ENCODE measurements at regions of chr22 and their contacts with region 1.

Region 1: DNA sequence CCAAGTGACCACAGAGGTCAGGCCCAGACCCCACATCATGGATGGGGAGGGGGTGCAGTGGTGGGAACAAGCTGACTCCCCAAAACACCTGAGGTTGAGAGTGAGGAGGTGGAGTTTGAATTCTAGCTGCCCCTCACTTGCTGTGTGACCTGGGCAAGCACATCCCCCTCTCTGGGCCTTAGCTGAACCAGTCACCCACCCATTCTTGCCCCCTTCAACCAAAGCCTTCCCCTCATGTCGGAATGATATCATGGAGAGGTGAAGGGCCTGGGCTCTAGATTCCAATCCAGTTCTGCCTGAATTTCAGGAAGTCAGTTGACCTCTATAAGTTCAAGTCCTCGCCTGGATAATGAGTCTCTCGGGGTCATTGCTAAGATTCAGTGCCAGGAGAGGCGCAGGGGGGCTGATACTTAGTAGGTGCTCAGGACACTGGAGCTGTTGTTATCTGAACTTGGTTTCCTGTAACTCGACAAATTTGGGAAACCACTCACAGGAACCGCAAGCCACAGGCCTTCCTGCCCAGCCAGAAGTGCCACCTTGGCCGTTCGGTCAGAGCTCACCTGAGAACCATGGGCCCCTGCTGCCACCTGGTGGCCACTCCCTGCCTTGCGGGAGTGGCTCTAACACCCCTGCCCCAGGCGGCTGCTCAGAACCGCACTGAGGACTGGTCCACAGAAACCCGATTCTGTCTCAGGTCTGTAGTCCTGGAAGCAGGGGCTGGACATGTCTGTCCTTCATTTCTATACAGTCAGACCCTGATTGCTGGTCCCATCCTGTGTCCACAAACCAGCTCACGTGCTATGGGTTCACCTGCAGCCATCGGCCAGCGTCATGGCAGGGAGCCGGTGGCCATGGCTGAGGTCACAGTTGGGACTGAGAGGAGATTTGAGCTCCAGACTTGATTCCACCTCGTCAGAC is 6.9 kb downstream of the CDC42EP1 start:
- DNase-seq: peak; percentile 70 to 93 (median 82)
- ATAC-seq: peak; percentile 94
- H3K4me3 ChIP-seq: peak overlapping the region; percentile 28
- H3K4me3 Mint-ChIP-seq: peak overlapping the region; percentile 61 to 85 (median 72)
- H3K27ac ChIP-seq: no peak overlapping the region
- H3K27ac Mint-ChIP-seq: peak overlapping the region in 3 of 9 donors; percentile 26 to 70 (median 62)
- H3K4me1 ChIP-seq: peaks cover 20 to 22% of the 10 kb centered on the region in 2 donors
- H3K4me1 Mint-ChIP-seq: peaks cover 16 to 35% (median 25%) of the 10 kb centered on the region in 7 donors
- H3K27me3 ChIP-seq: peaks cover under 1 to 4% of the 10 kb centered on the region in 2 donors
- H3K27me3 Mint-ChIP-seq: peaks cover 4 to 44% (median 12%) of the 10 kb centered on the region in 5 donors

Region 2: GRCh38 chr22:37316875-37317371 is 250.2 kb before region 1 on chr22:
- CTCF ChIA-PET with region 1: interaction called, 4 read pairs
- POLR2A ChIA-PET with region 1: no interaction called
- intact Hi-C with region 1: loop called (anchors 1 kb)
- DNase-seq: peak; percentile 37 to 75 (median 66)
- ATAC-seq: peak; percentile 84
- H3K4me3 ChIP-seq: no peak overlapping the region
- H3K4me3 Mint-ChIP-seq: no peak overlapping the region
- H3K27ac ChIP-seq: no peak overlapping the region
- H3K27ac Mint-ChIP-seq: peak overlapping the region in 6 of 9 donors; percentile 17 to 77 (median 51)
- H3K4me1 ChIP-seq: peaks cover 21 to 31% of the 10 kb centered on the region in 2 donors
- H3K4me1 Mint-ChIP-seq: peaks cover 22 to 47% (median 42%) of the 10 kb centered on the region in 7 donors
- H3K27me3 ChIP-seq: no peaks in the 10 kb centered on the region
- H3K27me3 Mint-ChIP-seq: peaks cover 0 to 14% (median 0%) of the 10 kb centered on the region in 5 donors

Region 3: DNA sequence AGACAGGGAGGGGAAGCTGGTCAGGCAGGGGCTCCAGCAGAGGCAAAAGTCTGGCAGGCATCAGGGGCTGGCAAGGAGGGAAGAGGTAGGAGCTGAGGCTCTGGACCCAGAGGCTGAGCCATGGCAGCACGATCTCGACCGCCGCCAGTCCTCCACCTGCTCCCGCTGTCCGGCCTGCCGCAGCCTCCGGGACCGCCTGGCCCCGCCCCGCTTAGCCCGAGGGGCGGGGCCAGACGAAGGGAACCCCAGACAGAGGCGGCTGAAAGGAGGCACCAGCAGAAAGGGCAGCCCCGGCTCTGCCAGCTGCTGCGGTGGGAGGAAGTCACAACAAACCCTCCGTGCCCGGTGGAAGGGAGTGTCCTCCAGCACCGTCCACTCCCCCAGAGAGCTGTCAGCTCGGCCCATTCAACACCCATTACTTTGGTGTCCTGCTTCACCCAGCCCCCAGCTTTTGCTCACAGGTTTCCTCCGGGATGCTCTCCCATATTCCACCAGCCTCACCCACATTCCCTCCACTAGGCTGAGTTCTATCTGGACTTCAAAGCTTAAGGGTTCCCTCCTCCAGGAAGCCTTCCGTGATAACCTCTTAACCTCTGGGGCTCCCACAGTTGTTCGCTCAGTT is 80.8 kb before region 1 on chr22 and contains the start of gene MFNG:
- CTCF ChIA-PET with region 1: interaction called, 3 read pairs
- POLR2A ChIA-PET with region 1: no interaction called
- intact Hi-C with region 1: loop called in 1 of 2 experiments (anchors 10 kb)
- DNase-seq: peak; percentile 57 to 82 (median 61)
- ATAC-seq: peak; percentile 81
- H3K4me3 ChIP-seq: peak within 1 kb of the TSS; percentile 84
- H3K4me3 Mint-ChIP-seq: peak within 1 kb of the TSS; percentile 91 to 99 (median 96)
- H3K27ac ChIP-seq: peak within 1 kb of the TSS; percentile 86
- H3K27ac Mint-ChIP-seq: peak within 1 kb of the TSS; percentile 94 to 99 (median 98)
- H3K4me1 ChIP-seq: peaks cover 25 to 57% of the 10 kb centered on the region in 2 donors
- H3K4me1 Mint-ChIP-seq: peaks cover 53 to 79% (median 68%) of the 10 kb centered on the region in 7 donors
- H3K27me3 ChIP-seq: no peaks in the 10 kb centered on the region
- H3K27me3 Mint-ChIP-seq: no peaks in the 10 kb centered on the region
- total RNA-seq, gene MFNG: 146 to 223 (median 203) TPM

Region 4: DNA sequence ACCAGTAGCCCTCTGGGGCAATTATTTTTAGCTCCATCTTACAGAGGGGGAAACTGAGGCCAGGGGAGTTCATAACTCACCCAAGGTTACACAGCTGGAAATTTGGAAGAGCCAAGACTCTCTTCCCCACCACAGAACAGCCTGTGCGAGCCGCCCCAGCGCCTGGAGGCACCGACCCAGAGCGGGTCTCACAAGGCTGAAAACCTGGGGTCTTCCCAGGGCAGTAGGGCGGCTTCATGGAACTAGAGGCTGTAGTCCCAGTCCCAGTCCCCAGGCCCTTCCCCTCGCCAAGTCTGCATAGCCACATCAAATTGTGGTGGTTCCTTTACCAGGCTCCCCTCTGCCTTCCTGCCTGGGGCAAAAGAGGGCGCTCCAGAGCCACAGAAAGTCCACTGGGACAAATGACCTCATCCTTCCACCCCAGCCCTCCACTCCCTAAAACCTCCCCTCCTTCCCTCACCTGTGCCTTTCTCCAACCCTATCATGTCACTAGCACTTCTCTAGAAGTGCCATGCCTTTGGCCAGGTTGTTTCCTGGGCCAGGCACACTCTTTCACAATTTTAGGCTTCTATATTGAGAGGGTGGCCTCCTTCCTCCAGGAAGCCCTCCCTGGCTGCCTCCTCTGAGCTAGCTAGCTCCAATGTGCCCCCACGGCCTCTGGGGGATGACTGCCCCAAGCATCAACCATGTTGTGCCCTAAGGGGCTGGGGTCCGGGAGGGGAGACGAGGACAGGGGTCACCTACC is 22.0 kb before region 1 on chr22:
- CTCF ChIA-PET with region 1: interaction called, 147 read pairs
- POLR2A ChIA-PET with region 1: interaction called, 26 read pairs
- intact Hi-C with region 1: loop called in 1 of 2 experiments (anchors 1 kb)
- DNase-seq: peak in 5 of 9 donors; percentile 31 to 65 (median 37)
- ATAC-seq: peak; percentile 77
- H3K4me3 ChIP-seq: no peak overlapping the region
- H3K4me3 Mint-ChIP-seq: peak overlapping the region in 1 of 10 donors; percentile 17
- H3K27ac ChIP-seq: no peak overlapping the region
- H3K27ac Mint-ChIP-seq: peak overlapping the region in 1 of 9 donors; percentile 50
- H3K4me1 ChIP-seq: peaks cover 0 to 7% of the 10 kb centered on the region in 2 donors
- H3K4me1 Mint-ChIP-seq: peaks cover 8 to 27% (median 11%) of the 10 kb centered on the region in 7 donors
- H3K27me3 ChIP-seq: peaks cover 0 to 1% of the 10 kb centered on the region in 2 donors
- H3K27me3 Mint-ChIP-seq: peaks cover 0 to 14% (median 6%) of the 10 kb centered on the region in 5 donors

Region 5: DNA sequence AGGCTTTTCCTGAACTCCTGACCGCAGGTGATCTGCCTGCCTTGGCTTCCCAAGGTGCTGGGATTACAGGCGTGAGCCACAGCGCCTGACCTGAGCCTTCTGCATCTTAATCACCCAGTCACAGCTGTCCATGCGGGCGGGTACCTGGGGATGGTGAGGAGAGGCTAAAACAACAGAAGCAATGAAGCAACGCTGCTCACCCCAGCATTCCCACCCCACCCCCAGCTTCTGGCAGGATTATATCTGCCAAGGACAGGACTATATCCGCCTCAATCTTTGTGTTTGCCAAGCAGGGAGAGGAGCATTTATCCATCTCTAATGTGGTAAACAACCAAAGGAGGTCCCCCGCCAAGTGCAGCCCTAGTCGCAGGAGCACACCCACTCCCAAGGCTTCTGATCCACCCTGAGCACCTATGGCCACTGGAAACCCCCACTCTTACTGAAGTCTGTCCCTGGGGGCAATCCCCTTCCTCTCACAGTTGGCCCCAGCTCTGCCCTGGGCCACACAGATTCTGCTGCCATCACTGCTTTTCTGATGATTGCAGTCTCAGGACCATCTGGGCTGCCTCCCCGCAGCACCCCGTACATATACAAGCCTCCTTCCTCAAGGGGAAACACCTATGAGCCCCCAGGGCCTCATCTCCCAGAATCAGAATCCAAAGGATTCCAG is 21.5 kb after region 1 on chr22:
- CTCF ChIA-PET with region 1: interaction called, 56 read pairs
- POLR2A ChIA-PET with region 1: interaction called, 26 read pairs
- intact Hi-C with region 1: loop called (anchors 1 to 2 kb)
- DNase-seq: no peak
- ATAC-seq: no peak
- H3K4me3 ChIP-seq: no peak overlapping the region
- H3K4me3 Mint-ChIP-seq: no peak overlapping the region
- H3K27ac ChIP-seq: no peak overlapping the region
- H3K27ac Mint-ChIP-seq: no peak overlapping the region
- H3K4me1 ChIP-seq: peaks cover 0 to 5% of the 10 kb centered on the region in 2 donors
- H3K4me1 Mint-ChIP-seq: peaks cover 11 to 18% (median 12%) of the 10 kb centered on the region in 7 donors
- H3K27me3 ChIP-seq: no peaks in the 10 kb centered on the region
- H3K27me3 Mint-ChIP-seq: peaks cover 0 to 15% (median 3%) of the 10 kb centered on the region in 5 donors

Measured in naive thymus-derived CD4-positive, alpha-beta T cell (primary cell).